Right ventricle myocardium superior (tissue), 1 donor: ENCODE measurements at regions of chr11 and their contacts with region 1.

Region 1: DNA sequence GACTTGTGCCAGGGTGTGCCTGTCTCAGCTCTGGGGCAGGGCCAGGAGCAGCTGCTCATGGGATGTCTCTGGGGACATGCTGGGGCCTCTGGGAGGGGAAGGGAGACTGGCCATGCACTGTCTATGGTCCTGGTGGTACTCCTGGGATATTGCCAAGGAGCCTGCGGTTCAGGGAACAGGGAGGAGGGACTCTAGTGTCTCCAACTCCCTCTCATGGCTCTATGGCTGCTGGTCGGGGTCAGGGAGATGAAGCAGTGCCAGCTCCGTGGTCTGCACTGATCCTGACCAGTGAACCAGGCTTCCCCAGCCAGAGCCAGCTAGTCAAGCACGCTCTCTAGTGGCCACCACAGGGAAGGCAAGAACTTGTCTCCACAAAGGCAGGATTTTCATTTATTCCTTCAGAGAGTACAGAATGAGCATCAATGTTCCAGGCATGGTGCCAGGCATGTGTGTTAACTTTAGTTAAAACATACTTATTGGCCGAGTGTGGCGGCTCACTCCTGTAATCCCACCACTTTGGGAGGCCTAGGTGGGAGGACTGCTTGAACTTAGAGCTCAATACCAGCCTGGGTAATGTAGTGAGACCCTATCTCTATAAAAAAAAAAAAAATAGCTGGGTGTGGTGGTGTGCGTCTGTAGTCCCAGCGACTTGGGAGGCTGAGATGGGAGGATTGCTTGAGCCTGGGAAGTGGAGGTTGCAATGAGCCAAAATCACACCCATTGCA is 2.5 kb upstream of the BEST1 start:
- DNase-seq: peak; percentile 91
- ATAC-seq: peak; percentile 86

Region 2: GRCh38 chr11:61792310-61793085 is 155.2 kb before region 1 on chr11 and contains the starts of genes FEN1 and TMEM258:
- intact Hi-C with region 1: loop called (anchors 5 kb)
- DNase-seq: peak; percentile 93
- ATAC-seq: peak; percentile 95
- total RNA-seq, gene FEN1: 6.3 TPM
- total RNA-seq, gene TMEM258: 123 TPM

Region 3: DNA sequence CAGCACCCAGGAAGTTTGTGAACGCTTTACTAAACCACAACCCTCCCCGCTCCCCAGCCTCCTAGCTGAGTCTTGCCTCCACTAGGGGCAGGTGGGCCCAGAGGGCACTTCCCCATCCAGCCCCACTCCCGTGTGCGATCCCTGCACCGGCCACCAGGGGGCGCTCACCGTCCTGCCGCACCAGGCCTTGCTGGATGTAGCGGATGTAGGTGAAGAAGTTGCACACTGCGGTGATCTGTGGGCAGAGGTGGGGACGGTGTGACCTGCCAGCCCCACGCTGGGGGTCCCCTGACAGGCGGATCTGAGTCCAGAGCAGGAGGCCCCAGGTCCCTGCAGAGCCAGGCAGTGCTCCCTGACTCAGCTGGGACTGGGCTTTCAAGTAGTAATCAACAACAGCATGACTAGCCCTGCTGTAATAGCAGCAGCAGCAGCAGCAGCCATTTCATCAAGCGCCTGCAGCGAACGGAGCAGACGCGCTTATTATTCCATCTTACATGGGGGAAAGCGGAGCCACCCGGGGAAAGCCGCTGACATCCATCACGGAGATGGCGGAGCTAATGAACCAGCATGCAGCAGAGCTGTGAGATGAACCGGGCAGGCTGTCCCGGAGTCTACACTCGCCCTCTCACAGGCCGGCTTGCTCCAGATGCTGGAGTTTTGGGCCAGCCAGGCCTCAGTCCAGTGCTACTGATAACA is 48.4 kb before region 1 on chr11:
- intact Hi-C with region 1: loop called (anchors 2 kb)
- DNase-seq: peak; percentile 91
- ATAC-seq: peak; percentile 84